AG04449 (cell line): ENCODE measurements at regions of chr3 and their contacts with region 1.

Region 1: DNA sequence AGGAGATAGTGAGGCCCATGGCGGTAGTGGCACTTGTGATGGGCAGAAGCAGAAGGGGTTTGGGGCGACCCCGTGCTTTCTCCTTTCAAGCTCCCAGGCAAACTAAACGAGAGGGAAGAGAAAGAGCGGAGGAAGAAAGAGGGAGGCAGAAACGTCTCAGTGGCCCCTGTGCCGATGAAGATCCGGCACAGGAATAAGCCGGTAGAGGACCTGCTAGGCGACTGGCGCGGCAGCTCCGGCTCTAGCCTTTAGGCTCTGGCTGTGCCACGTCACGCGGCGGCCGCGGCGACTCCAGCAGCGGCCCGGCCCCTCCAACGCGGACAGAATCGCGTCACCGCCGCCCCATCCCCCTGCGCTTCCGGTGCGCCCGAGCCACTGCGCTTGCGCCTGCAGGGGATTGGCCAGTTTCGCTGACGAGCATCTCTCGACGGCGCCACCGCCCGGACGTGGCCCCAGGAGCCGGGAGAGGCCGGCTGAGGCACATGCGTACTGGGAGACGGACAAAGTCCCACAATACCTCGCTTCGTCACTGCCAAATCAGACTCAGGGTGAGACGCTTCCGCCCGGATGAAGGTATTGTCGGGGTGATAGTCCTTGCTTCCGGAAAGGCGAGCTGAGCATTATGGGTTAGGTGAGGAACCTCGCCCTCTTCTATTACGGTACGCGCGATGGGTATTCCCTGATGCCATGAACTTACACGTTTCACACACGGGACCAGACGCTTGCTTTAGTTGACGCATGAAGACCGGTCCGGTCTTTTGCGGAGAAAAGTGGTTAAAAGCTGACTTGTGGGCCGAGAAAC is at the start of gene ARF4:
- DNase-seq: peak; percentile 96
- H3K4me3 ChIP-seq: peak within 1 kb of the TSS; percentile 75
- CTCF ChIP-seq: peak; percentile 43

Region 2: GRCh38 chr3:57555738-57556458 is 41.4 kb before region 1 on chr3 and contains the start of gene PDE12:
- CTCF ChIA-PET with region 1: interaction called, 3 read pairs
- POLR2A ChIA-PET with region 1: interaction called, 11 read pairs
- DNase-seq: peak; percentile 57
- H3K4me3 ChIP-seq: peak within 1 kb of the TSS; percentile 84
- CTCF ChIP-seq: no peak